Activated CD4-positive, alpha-beta T cell treated with anti-CD3 and anti-CD28 coated beads, Interleukin-2, amount 10 ng/mL, durations not matched to agents 7 days and 5 days (primary cell): ENCODE measurements at regions of chr9 and their contacts with region 1.

Region 1: GRCh38 chr9:93132287-93132927 is 1.6 kb downstream of the NINJ1 start:
- DNase-seq: no peak
- H3K4me3 Mint-ChIP-seq: peak overlapping the region; percentile 85
- H3K27ac Mint-ChIP-seq: peak overlapping the region; percentile 88
- H3K4me1 Mint-ChIP-seq: peaks cover 51% of the 10 kb centered on the region
- H3K27me3 Mint-ChIP-seq: no peaks in the 10 kb centered on the region

Region 2: DNA sequence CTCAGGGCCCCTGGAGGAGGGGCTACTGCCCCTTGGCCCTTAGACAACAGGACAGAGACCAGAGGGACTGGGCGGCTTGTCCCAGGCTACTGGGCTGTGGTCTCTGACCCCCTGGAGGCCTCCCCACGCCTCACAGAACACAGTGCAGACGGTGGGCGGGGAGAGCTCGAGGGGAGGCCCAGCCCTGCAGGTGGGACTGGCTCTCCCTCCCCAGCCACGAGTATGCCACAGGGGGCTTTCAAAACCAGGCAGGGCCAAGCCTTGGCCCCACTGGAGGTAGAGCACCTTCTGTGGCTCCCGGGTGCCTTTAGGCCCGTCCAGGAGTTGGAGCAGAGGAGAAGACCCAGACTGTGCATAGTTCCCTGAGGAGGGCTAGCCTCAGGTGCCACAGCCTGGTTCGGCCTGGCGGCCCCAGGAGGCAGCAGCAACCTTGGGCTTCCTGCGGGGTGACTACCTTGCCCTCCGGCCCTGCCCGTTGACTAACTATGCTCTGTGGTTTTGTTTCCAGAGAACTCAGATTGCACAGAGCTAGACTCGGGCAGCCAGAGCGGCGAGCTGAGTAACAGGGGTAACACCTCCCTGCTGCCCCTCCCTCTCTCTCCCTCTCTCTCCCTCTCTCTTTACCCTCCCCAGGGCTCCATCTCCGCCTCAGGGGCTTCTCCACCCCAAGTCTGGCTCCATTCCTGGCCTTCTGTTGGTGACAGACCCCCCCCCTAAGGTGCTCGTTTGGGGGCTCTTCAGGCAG is 20.9 kb before region 1 on chr9:
- CTCF ChIA-PET with region 1: interaction called, 24 read pairs
- POLR2A ChIA-PET with region 1: no interaction called
- DNase-seq: no peak
- H3K4me3 Mint-ChIP-seq: no peak overlapping the region
- H3K27ac Mint-ChIP-seq: no peak overlapping the region
- H3K4me1 Mint-ChIP-seq: peaks cover 36% of the 10 kb centered on the region
- H3K27me3 Mint-ChIP-seq: no peaks in the 10 kb centered on the region

Region 3: DNA sequence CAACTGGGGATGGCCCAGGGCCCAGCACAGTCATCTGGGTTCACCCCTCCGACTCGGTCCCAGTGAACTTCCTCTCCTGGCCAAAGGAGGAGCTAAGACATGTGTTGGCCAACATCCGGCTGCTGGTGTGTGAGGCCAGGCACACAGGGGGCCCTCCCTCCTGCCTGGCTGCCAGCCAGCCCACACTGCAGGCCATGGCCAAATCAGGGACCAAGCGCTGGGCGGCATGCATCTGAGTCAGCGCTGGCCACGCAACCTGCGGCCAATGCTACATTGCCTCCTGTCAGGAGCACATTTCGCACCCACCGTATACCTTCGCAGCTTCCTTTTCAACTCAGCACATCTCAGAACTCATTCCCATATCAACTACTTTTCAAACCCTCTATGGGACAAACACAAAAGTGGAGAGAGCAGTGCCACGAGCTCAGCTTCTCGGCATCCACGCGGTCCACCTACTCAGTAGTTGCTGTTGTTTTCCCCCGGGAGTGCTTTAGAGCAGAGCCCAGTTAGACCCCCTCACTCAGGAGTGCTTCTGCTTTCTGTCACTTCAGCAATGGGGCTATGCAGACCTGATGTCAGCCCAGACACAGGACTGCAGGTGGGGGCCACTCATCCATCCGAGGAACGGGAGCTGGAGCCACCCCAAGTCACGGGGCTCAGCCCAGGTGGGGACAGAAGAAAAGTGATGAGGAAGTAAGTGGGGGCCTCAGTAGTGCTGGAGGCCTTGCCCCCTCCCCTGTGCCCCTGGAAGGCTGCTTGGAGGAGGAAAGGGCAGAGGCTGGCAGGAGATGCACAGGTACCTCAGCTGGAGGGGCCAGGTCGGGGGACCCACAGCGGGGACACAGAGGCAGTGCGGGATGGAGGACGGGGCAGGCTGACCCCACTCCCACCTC is 12.2 kb before region 1 on chr9:
- CTCF ChIA-PET with region 1: interaction called, 10 read pairs
- POLR2A ChIA-PET with region 1: no interaction called
- DNase-seq: peak; percentile 47
- H3K4me3 Mint-ChIP-seq: no peak overlapping the region
- H3K27ac Mint-ChIP-seq: peak overlapping the region; percentile 91
- H3K4me1 Mint-ChIP-seq: peaks cover 29% of the 10 kb centered on the region
- H3K27me3 Mint-ChIP-seq: no peaks in the 10 kb centered on the region

Region 4: DNA sequence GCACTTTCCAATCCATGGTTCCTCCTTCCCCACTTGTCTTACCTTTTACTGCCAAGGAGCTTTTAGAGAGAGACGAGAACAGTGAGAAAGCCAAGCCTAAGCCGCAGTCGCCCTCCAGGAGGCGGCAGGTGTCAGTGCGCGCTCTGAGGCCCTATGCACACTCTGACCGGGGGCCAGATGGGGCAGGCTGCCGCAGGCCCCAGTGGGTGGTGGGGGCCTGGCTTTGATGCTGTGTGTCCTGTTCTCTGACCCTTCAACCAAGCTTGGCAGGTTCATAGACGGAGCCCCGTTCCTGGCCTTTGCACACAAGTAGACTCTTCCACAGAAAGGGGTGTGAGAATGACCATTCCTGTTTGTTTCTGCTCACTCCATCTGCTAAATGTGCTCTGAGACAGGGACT is 128.9 kb after region 1 on chr9:
- CTCF ChIA-PET with region 1: no interaction called
- POLR2A ChIA-PET with region 1: no interaction called
- DNase-seq: no peak
- H3K4me3 Mint-ChIP-seq: no peak overlapping the region
- H3K27ac Mint-ChIP-seq: no peak overlapping the region
- H3K4me1 Mint-ChIP-seq: no peaks in the 10 kb centered on the region
- H3K27me3 Mint-ChIP-seq: no peaks in the 10 kb centered on the region